ENCODE measurements at regions of chr17 and their contacts with region 1.

Region 1: GRCh38 chr17:65556014-65556909 is 5.2 kb downstream of the AXIN2 start:
- DNase-seq: no peak
- ATAC-seq: peak; percentile 72
- H3K4me3 ChIP-seq: peak overlapping the region; percentile 49; the same call in 1 of the 2 replicates
- H3K27ac ChIP-seq: no peak overlapping the region
- H3K4me1 ChIP-seq: peaks cover 4% of the 10 kb centered on the region; the same call in 1 of the 2 replicates
- H3K27me3 ChIP-seq: peaks cover 0 to 5% of the 10 kb centered on the region in 2 experiments; a peak in 2 of 4 replicates
- CTCF ChIP-seq: peak; percentile 67 to 91 (median 90)
- EP300 ChIP-seq: no peak
- POLR2A ChIP-seq: no peak
- RAD21 ChIP-seq: peak; percentile 58

Region 2: GRCh38 chr17:65294179-65294720 is 262.0 kb before region 1 on chr17:
- CTCF ChIA-PET with region 1: interaction called, 18 read pairs
- POLR2A ChIA-PET with region 1: interaction called, 3 read pairs
- RAD21 ChIA-PET with region 1: interaction called, 16 read pairs
- SMC1A ChIA-PET with region 1: interaction called, 4 read pairs
- in situ Hi-C with region 1: loop called (anchors 5 kb)
- intact Hi-C with region 1: loop called (anchors 1 kb)
- DNase-seq: no peak
- ATAC-seq: peak; percentile 99
- H3K4me3 ChIP-seq: no peak overlapping the region
- H3K27ac ChIP-seq: no peak overlapping the region
- H3K4me1 ChIP-seq: no peaks in the 10 kb centered on the region
- H3K27me3 ChIP-seq: no peaks in the 10 kb centered on the region
- CTCF ChIP-seq: peak; percentile 82 to 87 (median 85)
- EP300 ChIP-seq: no peak
- POLR2A ChIP-seq: no peak
- RAD21 ChIP-seq: peak; percentile 88

Region 3: DNA sequence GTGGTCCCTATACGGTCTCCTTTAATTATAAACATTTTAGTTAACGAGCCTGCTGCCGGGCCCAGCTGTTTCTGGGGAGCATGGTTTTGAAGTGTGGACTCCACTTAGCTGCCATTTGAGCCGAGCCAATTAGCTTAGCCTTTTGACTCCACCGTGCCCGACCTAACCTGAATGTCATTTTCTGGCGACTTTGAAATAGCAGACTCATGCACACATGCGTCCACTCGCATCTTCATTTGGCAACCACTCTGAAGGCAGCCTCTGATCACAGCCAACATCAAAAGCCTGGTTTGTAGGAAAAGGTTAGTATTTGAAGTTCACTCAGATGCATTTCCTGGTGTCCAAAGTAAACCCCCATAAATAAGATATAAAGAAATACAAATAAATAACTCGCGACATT is 11.6 kb before region 1 on chr17:
- CTCF ChIA-PET with region 1: interaction called, 7 read pairs
- POLR2A ChIA-PET with region 1: no interaction called
- RAD21 ChIA-PET with region 1: no interaction called
- SMC1A ChIA-PET with region 1: interaction called, 10 read pairs
- in situ Hi-C with region 1: no loop called
- intact Hi-C with region 1: no loop called
- DNase-seq: no peak
- ATAC-seq: no peak
- H3K4me3 ChIP-seq: no peak overlapping the region
- H3K27ac ChIP-seq: no peak overlapping the region
- H3K4me1 ChIP-seq: no peaks in the 10 kb centered on the region
- H3K27me3 ChIP-seq: no peaks in the 10 kb centered on the region
- CTCF ChIP-seq: no peak
- EP300 ChIP-seq: no peak
- POLR2A ChIP-seq: no peak
- RAD21 ChIP-seq: no peak

Region 4: GRCh38 chr17:65604070-65604469 is 47.8 kb after region 1 on chr17:
- CTCF ChIA-PET with region 1: no interaction called
- POLR2A ChIA-PET with region 1: no interaction called
- RAD21 ChIA-PET with region 1: no interaction called
- SMC1A ChIA-PET with region 1: no interaction called
- in situ Hi-C with region 1: no loop called
- intact Hi-C with region 1: no loop called
- DNase-seq: no peak
- ATAC-seq: no peak
- H3K4me3 ChIP-seq: no peak overlapping the region
- H3K27ac ChIP-seq: no peak overlapping the region
- H3K4me1 ChIP-seq: no peaks in the 10 kb centered on the region
- H3K27me3 ChIP-seq: no peaks in the 10 kb centered on the region; a peak in 1 of 4 replicates
- CTCF ChIP-seq: no peak
- EP300 ChIP-seq: no peak
- POLR2A ChIP-seq: no peak
- RAD21 ChIP-seq: no peak

Region 5: DNA sequence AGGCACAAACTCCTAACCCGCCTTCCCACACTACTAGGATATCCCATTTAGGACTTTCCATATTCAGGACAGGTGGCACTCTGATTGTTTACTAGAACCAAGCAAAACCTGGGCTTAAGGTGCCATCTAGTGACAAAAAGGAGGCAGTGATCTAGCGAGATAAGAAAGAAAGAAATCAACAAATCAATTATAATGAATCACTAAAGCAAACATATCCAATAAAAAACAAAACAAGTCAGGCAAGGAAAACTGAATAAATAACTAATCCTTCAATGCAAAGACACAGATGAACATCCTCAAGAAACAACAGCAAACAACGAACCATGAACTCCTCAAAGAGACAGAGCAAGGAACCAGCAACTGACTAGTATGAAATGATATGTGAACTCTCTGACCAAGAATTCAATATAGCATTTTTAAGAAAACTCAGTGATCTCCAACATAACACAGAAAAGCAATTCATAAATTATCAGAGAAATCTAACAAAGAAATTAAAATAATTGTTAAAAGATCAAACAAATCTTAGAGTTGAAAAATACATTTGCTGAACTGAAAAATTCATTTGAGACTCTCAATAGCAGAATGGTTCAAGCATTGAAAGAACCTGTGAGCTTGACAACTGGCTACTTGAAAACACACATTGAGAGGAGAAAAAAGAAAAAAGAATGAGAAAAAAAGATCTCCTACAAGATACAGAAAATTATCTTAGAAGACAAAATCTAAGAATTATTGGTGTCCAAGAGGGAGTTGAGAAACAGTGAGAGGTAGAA is 432.0 kb after region 1 on chr17:
- CTCF ChIA-PET with region 1: no interaction called
- POLR2A ChIA-PET with region 1: no interaction called
- RAD21 ChIA-PET with region 1: interaction called, 4 read pairs
- SMC1A ChIA-PET with region 1: interaction called, 4 read pairs
- in situ Hi-C with region 1: no loop called
- intact Hi-C with region 1: loop called (anchors 5 kb)
- DNase-seq: peak; percentile 5
- ATAC-seq: peak; percentile 62
- H3K4me3 ChIP-seq: no peak overlapping the region
- H3K27ac ChIP-seq: no peak overlapping the region
- H3K4me1 ChIP-seq: no peaks in the 10 kb centered on the region
- H3K27me3 ChIP-seq: no peaks in the 10 kb centered on the region
- CTCF ChIP-seq: peak; percentile 42 to 53 (median 51); a peak in 5 of 6 replicates
- EP300 ChIP-seq: no peak
- POLR2A ChIP-seq: no peak
- RAD21 ChIP-seq: peak; percentile 81

Measured in GM12878 (cell line).